Naive thymus-derived CD4-positive, alpha-beta T cell (primary cell): ENCODE measurements at regions of chr6 and their contacts with region 1.

Region 1: GRCh38 chr6:134822920-134823709 is 126.8 kb downstream of the ALDH8A1 start:
- DNase-seq: peak in 7 of 9 donors; percentile 17 to 55 (median 43)
- ATAC-seq: peak; percentile 88
- H3K4me3 ChIP-seq: no peak overlapping the region
- H3K4me3 Mint-ChIP-seq: no peak overlapping the region
- H3K27ac ChIP-seq: no peak overlapping the region
- H3K27ac Mint-ChIP-seq: peak overlapping the region in 1 of 9 donors; percentile 5
- H3K4me1 ChIP-seq: peaks cover 0 to 4% of the 10 kb centered on the region in 2 donors
- H3K4me1 Mint-ChIP-seq: peaks cover 0 to 3% (median 0%) of the 10 kb centered on the region in 7 donors
- H3K27me3 ChIP-seq: no peaks in the 10 kb centered on the region
- H3K27me3 Mint-ChIP-seq: peaks cover 0 to 4% (median 0%) of the 10 kb centered on the region in 5 donors

Region 2: DNA sequence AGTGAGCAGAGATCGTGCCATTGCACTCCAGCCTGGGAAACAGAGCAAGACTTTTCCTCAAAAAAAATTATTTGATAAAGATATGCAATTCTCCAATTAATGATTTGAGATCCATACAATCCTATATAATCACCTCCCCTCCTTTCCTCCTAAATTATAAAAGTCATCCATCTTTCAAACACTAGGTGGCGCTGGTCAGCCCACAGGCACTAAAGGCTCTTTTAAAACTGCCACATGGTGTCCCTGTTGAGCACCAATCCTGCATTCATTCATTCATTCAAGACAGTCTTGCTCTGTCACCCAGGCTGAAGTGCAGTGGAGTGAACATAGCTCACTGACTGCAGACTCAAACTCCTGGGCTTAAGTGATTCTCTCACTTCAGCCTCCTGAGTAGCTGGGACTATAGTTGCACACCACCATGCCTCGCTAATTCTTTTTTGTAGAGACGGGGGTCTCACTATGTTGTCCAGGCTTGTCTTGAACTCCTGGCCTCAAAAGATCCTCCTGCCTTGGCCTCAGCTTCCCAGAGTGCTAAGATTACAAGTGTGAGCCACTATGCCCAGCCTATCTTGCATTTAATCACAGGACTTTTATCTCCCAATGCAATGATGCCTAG is 711.9 kb before region 1 on chr6:
- CTCF ChIA-PET with region 1: no interaction called
- POLR2A ChIA-PET with region 1: no interaction called
- intact Hi-C with region 1: loop called in 1 of 2 experiments (anchors 1 kb)
- DNase-seq: peak in 8 of 9 donors; percentile 30 to 69 (median 53)
- ATAC-seq: peak; percentile 84
- H3K4me3 ChIP-seq: no peak overlapping the region
- H3K4me3 Mint-ChIP-seq: no peak overlapping the region
- H3K27ac ChIP-seq: no peak overlapping the region
- H3K27ac Mint-ChIP-seq: peak overlapping the region in 1 of 9 donors; percentile 15
- H3K4me1 ChIP-seq: no peaks in the 10 kb centered on the region
- H3K4me1 Mint-ChIP-seq: peaks cover 0 to 6% (median 0%) of the 10 kb centered on the region in 7 donors
- H3K27me3 ChIP-seq: no peaks in the 10 kb centered on the region
- H3K27me3 Mint-ChIP-seq: peaks cover 5 to 21% (median 11%) of the 10 kb centered on the region in 5 donors

Region 3: GRCh38 chr6:134123666-134124208 is 699.4 kb before region 1 on chr6:
- CTCF ChIA-PET with region 1: interaction called, 9 read pairs
- POLR2A ChIA-PET with region 1: no interaction called
- intact Hi-C with region 1: loop called (anchors 1 kb)
- DNase-seq: peak in 7 of 9 donors; percentile 7 to 75 (median 50)
- ATAC-seq: peak; percentile 99
- H3K4me3 ChIP-seq: no peak overlapping the region
- H3K4me3 Mint-ChIP-seq: peak overlapping the region in 4 of 10 donors; percentile 39 to 53 (median 51)
- H3K27ac ChIP-seq: no peak overlapping the region
- H3K27ac Mint-ChIP-seq: peak overlapping the region in 4 of 9 donors; percentile 22 to 70 (median 68)
- H3K4me1 ChIP-seq: no peaks in the 10 kb centered on the region
- H3K4me1 Mint-ChIP-seq: peaks cover 0 to 4% (median 0%) of the 10 kb centered on the region in 7 donors
- H3K27me3 ChIP-seq: no peaks in the 10 kb centered on the region
- H3K27me3 Mint-ChIP-seq: peaks cover 0 to 4% (median 0%) of the 10 kb centered on the region in 5 donors

Region 4: DNA sequence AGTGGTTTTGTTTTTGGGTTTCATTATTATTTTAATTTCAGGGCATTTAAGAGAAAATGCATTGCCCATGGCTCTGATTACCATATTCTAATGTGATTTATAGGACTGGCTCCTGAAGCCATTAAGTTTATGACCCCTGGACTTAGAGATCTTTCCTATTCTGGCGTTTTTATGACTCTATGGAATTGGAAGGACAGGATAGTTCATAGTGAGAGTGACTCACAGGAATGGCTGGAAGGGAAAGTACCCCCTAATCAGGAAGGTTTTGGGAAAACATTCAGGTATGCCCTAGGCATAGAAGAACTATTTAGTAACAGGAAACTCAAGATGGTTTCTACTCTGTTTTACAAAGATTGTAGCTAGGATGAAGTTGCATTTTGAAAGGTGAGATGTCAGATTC is 662.1 kb before region 1 on chr6:
- CTCF ChIA-PET with region 1: interaction called, 23 read pairs
- POLR2A ChIA-PET with region 1: no interaction called
- intact Hi-C with region 1: loop called (anchors 1 kb)
- DNase-seq: no peak
- ATAC-seq: no peak
- H3K4me3 ChIP-seq: no peak overlapping the region
- H3K4me3 Mint-ChIP-seq: no peak overlapping the region
- H3K27ac ChIP-seq: no peak overlapping the region
- H3K27ac Mint-ChIP-seq: no peak overlapping the region
- H3K4me1 ChIP-seq: no peaks in the 10 kb centered on the region
- H3K4me1 Mint-ChIP-seq: no peaks in the 10 kb centered on the region
- H3K27me3 ChIP-seq: no peaks in the 10 kb centered on the region
- H3K27me3 Mint-ChIP-seq: peaks cover 0 to 3% (median 0%) of the 10 kb centered on the region in 5 donors

Region 5: DNA sequence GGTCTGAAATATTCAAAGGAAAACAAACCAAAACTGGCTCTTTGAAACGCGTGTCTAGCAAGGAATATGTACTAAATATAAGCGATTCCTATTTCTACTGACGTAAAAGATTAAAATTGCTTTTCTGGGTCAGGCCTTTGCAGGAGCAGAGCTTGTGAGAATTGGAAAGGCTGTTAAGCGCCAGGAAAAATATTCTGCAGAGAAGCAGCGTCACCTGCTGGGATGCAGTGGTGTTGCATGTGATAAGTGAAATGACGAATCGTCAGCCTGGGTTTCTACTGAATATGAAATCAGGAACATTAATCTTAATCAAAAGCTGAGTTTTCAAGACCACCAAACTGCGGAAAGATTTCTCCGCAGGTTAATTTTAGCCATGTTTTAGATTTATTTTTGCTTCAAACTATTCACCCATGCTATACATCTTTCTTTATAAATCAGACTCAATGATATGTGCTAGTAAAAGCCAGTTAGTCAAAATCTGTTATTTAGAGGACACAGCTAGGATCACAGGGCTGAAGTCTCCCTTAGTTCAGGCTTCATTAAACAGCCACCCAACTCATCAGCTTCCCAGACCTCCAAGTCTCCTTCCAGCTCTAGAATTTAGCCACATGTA is 59.4 kb after region 1 on chr6:
- CTCF ChIA-PET with region 1: no interaction called
- POLR2A ChIA-PET with region 1: no interaction called
- intact Hi-C with region 1: loop called (anchors 1 kb)
- DNase-seq: peak in 7 of 9 donors; percentile 14 to 57 (median 41)
- ATAC-seq: no peak
- H3K4me3 ChIP-seq: no peak overlapping the region
- H3K4me3 Mint-ChIP-seq: no peak overlapping the region
- H3K27ac ChIP-seq: no peak overlapping the region
- H3K27ac Mint-ChIP-seq: no peak overlapping the region
- H3K4me1 ChIP-seq: no peaks in the 10 kb centered on the region
- H3K4me1 Mint-ChIP-seq: peaks cover 0 to 5% (median 0%) of the 10 kb centered on the region in 7 donors
- H3K27me3 ChIP-seq: no peaks in the 10 kb centered on the region
- H3K27me3 Mint-ChIP-seq: peaks cover 4 to 32% (median 11%) of the 10 kb centered on the region in 5 donors

Region 6: GRCh38 chr6:134938896-134939295 is 115.8 kb after region 1 on chr6:
- CTCF ChIA-PET with region 1: interaction called, 5 read pairs
- POLR2A ChIA-PET with region 1: no interaction called
- intact Hi-C with region 1: loop called in 1 of 2 experiments (anchors 2 kb)
- DNase-seq: peak in 6 of 9 donors; percentile 27 to 84 (median 34)
- ATAC-seq: peak; percentile 91
- H3K4me3 ChIP-seq: no peak overlapping the region
- H3K4me3 Mint-ChIP-seq: peak overlapping the region in 2 of 10 donors; percentile 25 to 28
- H3K27ac ChIP-seq: no peak overlapping the region
- H3K27ac Mint-ChIP-seq: peak overlapping the region in 3 of 9 donors; percentile 36 to 83 (median 55)
- H3K4me1 ChIP-seq: peaks cover 0 to 6% of the 10 kb centered on the region in 2 donors
- H3K4me1 Mint-ChIP-seq: peaks cover 0 to 15% (median 10%) of the 10 kb centered on the region in 7 donors
- H3K27me3 ChIP-seq: no peaks in the 10 kb centered on the region
- H3K27me3 Mint-ChIP-seq: no peaks in the 10 kb centered on the region

Region 7: DNA sequence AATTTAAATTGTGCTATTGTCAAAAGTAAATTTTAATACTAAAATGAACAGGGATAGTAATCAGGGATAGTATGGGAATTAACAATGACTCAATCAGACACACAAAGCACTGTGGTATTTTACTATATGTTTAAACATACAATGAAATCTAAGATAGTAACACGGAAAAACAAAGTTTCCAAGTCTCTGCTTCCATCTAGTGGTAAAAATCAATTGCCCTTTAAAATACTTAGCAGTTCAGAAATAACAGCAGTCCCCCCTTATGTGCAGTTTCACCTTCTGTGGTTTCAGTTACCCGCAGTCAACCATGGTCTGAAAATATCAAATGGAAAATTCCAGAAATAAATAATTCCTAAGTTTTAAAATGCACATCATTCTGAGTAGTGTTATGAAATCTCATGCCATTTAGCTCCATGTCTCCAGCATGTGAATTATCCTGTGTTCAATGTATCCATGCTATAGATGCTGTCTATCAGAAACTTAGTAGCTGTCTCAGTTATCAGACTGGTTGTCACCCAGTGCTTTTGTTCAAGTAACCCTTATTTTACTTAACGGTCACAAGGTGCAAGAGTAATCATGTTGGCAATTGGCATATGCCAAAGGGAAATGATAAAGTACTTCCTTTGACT is 615.9 kb after region 1 on chr6:
- CTCF ChIA-PET with region 1: no interaction called
- POLR2A ChIA-PET with region 1: no interaction called
- intact Hi-C with region 1: loop called in 1 of 2 experiments (anchors 1 kb)
- DNase-seq: peak in 6 of 9 donors; percentile 23 to 39 (median 27)
- ATAC-seq: peak; percentile 72
- H3K4me3 ChIP-seq: no peak overlapping the region
- H3K4me3 Mint-ChIP-seq: peak overlapping the region in 8 of 10 donors; percentile 15 to 85 (median 72)
- H3K27ac ChIP-seq: no peak overlapping the region
- H3K27ac Mint-ChIP-seq: peak overlapping the region in 7 of 9 donors; percentile 7 to 87 (median 60)
- H3K4me1 ChIP-seq: peaks cover 0 to 8% of the 10 kb centered on the region in 2 donors
- H3K4me1 Mint-ChIP-seq: peaks cover 12 to 27% (median 20%) of the 10 kb centered on the region in 7 donors
- H3K27me3 ChIP-seq: no peaks in the 10 kb centered on the region
- H3K27me3 Mint-ChIP-seq: no peaks in the 10 kb centered on the region